T-cell (primary cell): ENCODE measurements at regions of chr16 and their contacts with region 1.

Region 1: DNA sequence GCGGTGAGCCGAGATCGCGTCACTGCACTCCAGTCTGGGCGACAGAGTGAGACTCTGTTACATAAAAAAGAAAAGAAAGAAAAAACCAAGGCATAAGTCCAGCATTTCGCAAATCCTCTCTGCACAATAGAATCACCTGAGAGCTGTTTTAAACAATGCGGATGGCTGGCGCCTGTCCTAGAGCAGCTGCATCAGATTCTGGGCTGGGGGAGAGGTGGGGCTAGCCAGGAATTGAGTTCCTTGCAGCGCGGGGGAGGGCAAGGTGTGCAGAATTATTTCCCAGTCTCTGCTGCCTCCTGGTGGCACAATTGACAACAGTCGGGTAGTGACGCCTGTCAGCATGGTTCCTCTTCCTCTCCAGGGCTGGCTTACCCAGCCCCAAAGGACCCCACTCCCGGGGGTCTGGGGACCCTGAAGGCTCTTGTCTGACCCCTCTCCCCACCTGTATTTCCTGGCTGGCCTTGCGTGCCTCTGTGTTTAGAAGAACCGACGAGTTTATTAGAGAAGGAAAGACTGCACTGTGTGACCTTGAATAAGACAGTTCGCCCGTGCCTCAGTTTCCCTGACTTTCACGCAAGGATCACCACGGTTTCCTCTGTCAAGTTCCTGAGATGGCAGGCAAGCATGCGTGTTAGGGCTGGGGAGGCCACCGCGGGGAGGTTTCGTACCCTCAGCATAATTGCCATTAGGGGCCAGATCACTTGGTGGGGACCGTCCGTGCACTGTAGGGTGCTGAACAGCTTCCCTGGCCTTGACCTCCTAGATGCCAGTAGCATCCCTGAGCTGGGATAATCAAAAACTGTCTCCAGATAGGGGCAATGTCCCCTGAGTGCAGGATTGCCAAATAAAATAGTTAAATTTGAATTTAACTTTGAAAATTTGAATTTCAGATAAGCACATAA is 41.0 kb upstream of the PLCG2 start:
- DNase-seq: peak; percentile 67 to 91 (median 82)
- ATAC-seq: peak; percentile 91 to 98 (median 95)
- H3K4me3 ChIP-seq: peak overlapping the region; percentile 27 to 40
- H3K4me3 Mint-ChIP-seq: peak overlapping the region; percentile 43 to 71 (median 59)
- H3K27ac ChIP-seq: no peak overlapping the region
- H3K27ac Mint-ChIP-seq: peak overlapping the region; percentile 44 to 55
- H3K4me1 ChIP-seq: peaks cover 2 to 17% of the 10 kb centered on the region in 2 experiments
- H3K4me1 Mint-ChIP-seq: peaks cover 8 to 13% (median 10%) of the 10 kb centered on the region in 3 donors
- H3K27me3 ChIP-seq: peaks cover 0 to 2% of the 10 kb centered on the region in 2 experiments
- H3K27me3 Mint-ChIP-seq: no peaks in the 10 kb centered on the region

Region 2: DNA sequence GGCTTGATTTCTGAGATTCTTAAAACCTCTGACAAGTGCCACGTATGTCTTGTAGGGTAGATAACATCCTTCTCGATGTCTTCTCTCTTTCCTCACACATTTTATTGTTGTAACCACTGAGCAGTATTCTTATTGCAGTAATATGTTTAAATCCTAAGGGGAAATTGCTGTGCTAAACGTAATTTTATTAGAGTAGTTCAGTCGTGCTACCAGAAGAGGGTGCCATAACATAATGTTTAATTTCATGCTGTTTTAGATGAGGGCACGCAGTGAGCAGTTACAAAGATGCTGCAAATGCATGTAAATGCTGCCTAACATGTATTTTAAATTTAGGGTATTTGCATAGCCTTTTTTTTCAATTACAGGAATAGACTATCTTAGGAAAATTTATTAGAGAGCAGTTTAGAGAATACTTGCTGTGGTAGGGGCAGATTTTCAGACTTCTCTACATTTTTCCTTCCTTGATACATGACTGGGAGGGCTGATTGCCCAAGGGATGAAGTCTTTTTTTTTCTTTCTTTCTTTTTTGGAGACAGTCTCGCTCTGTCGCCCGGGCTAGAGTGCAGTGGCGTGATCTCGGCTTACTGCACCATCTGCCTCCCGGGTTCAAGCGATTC is 371.7 kb before region 1 on chr16:
- CTCF ChIA-PET with region 1: interaction called, 10 to 16 read pairs
- POLR2A ChIA-PET with region 1: no interaction called
- DNase-seq: peak in 11 of 35 experiments; percentile 2 to 72 (median 11)
- ATAC-seq: peak in 3 of 4 experiments; percentile 53 to 61 (median 59)
- H3K4me3 ChIP-seq: no peak overlapping the region
- H3K4me3 Mint-ChIP-seq: no peak overlapping the region
- H3K27ac ChIP-seq: no peak overlapping the region
- H3K27ac Mint-ChIP-seq: no peak overlapping the region
- H3K4me1 ChIP-seq: no peaks in the 10 kb centered on the region
- H3K4me1 Mint-ChIP-seq: no peaks in the 10 kb centered on the region
- H3K27me3 ChIP-seq: no peaks in the 10 kb centered on the region
- H3K27me3 Mint-ChIP-seq: no peaks in the 10 kb centered on the region

Region 3: GRCh38 chr16:81558444-81559175 is 179.5 kb before region 1 on chr16:
- CTCF ChIA-PET with region 1: no interaction called
- POLR2A ChIA-PET with region 1: no interaction called
- DNase-seq: peak in 4 of 35 experiments; percentile 7 to 39 (median 14)
- ATAC-seq: no peak
- H3K4me3 ChIP-seq: no peak overlapping the region
- H3K4me3 Mint-ChIP-seq: no peak overlapping the region
- H3K27ac ChIP-seq: no peak overlapping the region
- H3K27ac Mint-ChIP-seq: no peak overlapping the region
- H3K4me1 ChIP-seq: peaks cover 0 to 21% of the 10 kb centered on the region in 2 experiments
- H3K4me1 Mint-ChIP-seq: peaks cover 6 to 42% (median 37%) of the 10 kb centered on the region in 3 donors
- H3K27me3 ChIP-seq: no peaks in the 10 kb centered on the region
- H3K27me3 Mint-ChIP-seq: no peaks in the 10 kb centered on the region